H1 (cell line): ENCODE measurements at regions of chr22 and their contacts with region 1.

Region 1: DNA sequence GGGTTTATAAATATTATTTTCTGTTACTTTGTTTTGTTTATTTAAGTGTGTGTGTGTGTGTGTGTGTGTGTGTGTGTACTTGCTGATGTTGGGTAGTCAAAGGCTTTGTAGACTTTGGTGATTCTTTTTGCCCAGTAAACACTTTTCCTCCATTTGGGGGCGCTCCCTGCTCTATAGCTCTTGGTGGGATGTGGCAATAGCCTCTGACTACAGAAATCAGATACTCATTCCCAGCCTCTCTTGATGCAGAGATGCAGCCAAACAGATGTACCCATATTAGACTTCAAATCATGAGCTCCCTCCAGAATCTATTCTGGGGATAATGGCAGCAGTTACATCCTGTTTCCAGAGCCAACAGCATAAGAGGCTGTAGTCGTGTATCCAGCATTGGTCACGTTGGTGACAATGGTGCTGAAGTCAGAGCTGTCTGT is 33.4 kb upstream of the APOL5 start:
- DNase-seq: peak in 1 of 2 experiments; percentile 61
- H3K4me3 ChIP-seq: no peak overlapping the region
- H3K27ac ChIP-seq: no peak overlapping the region
- H3K4me1 ChIP-seq: no peaks in the 10 kb centered on the region
- H3K27me3 ChIP-seq: no peaks in the 10 kb centered on the region
- CTCF ChIP-seq: peak; percentile 22 to 60 (median 57)
- EP300 ChIP-seq: no peak
- POLR2A ChIP-seq: no peak
- RAD21 ChIP-seq: peak; percentile 68 to 76

Region 2: GRCh38 chr22:35663371-35663770 is 20.9 kb before region 1 on chr22:
- CTCF ChIA-PET with region 1: interaction called, 12 read pairs
- POLR2A ChIA-PET with region 1: no interaction called
- DNase-seq: no peak
- H3K4me3 ChIP-seq: peak overlapping the region in 1 of 4 experiments; percentile 26; a peak in 1 of 8 replicates
- H3K27ac ChIP-seq: no peak overlapping the region
- H3K4me1 ChIP-seq: peaks cover 0 to 10% (median 4%) of the 10 kb centered on the region in 4 experiments; a peak in 2 of 7 replicates
- H3K27me3 ChIP-seq: no peaks in the 10 kb centered on the region
- CTCF ChIP-seq: no peak
- EP300 ChIP-seq: no peak
- POLR2A ChIP-seq: no peak
- RAD21 ChIP-seq: no peak

Region 3: GRCh38 chr22:35792506-35792905 is 108.2 kb after region 1 on chr22:
- CTCF ChIA-PET with region 1: no interaction called
- POLR2A ChIA-PET with region 1: no interaction called
- DNase-seq: no peak
- H3K4me3 ChIP-seq: no peak overlapping the region
- H3K27ac ChIP-seq: no peak overlapping the region
- H3K4me1 ChIP-seq: no peaks in the 10 kb centered on the region
- H3K27me3 ChIP-seq: no peaks in the 10 kb centered on the region
- CTCF ChIP-seq: no peak
- EP300 ChIP-seq: no peak
- POLR2A ChIP-seq: no peak
- RAD21 ChIP-seq: no peak